ENCODE measurements at regions of chr10 and their contacts with region 1.

Region 1: GRCh38 chr10:68666280-68666760 is 54.7 kb upstream of the CCAR1 start:
- DNase-seq: peak; percentile 95
- ATAC-seq: peak; percentile 91
- H3K4me3 ChIP-seq: no peak overlapping the region
- H3K27ac ChIP-seq: peak overlapping the region; percentile 91
- H3K4me1 ChIP-seq: peaks cover 5% of the 10 kb centered on the region
- H3K27me3 ChIP-seq: no peaks in the 10 kb centered on the region
- CTCF ChIP-seq: no peak
- POLR2A ChIP-seq: no peak
- RAD21 ChIP-seq: no peak

Region 2: DNA sequence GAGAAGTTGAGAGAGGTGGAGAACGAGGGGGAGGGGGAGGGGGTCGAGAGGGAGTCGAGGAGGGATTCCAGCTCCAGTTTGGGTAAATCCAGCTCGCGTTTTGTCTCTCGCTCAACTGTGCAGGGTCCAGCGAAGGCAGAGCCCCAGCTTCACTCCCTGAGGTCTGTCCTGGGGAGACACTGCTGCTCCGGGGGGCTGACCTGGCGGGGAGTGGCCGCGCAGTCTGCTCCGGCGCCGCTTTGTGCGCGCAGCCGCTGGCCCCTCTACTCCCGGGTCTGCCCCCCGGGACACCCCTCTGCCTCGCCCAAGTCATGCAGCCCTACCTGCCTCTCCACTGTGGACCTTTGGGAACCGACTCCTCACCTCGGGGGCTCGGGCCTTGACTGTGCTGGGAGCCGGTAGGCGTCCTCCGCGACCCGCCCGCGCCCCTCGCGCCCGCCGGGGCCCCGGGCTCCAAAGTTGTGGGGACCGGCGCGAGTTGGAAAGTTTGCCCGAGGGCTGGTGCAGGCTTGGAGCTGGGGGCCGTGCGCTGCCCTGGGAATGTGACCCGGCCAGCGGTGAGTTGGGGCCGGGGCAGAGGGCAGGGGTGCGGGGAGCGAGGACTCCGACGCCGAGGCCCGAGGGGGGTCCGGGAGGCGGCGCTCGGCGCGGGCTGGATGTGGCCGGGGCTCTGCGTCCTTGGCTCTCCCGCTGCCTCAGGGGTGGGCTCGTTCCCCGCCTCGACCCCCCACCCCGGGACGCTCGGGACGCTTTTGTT is 106.0 kb before region 1 on chr10 and contains the start of gene TET1:
- CTCF ChIA-PET with region 1: no interaction called
- POLR2A ChIA-PET with region 1: no interaction called
- dilution Hi-C with region 1: no loop called
- in situ Hi-C with region 1: no loop called
- intact Hi-C with region 1: loop called (anchors 1 kb)
- DNase-seq: peak; percentile 59
- ATAC-seq: peak; percentile 67
- H3K4me3 ChIP-seq: peak within 1 kb of the TSS; percentile 96
- H3K27ac ChIP-seq: peak within 1 kb of the TSS; percentile 82
- H3K4me1 ChIP-seq: peaks cover 1% of the 10 kb centered on the region; the same call in 1 of the 2 replicates
- H3K27me3 ChIP-seq: no peaks in the 10 kb centered on the region
- CTCF ChIP-seq: no peak
- POLR2A ChIP-seq: peak; percentile 29; the same call in 1 of the 2 replicates
- RAD21 ChIP-seq: no peak
- total RNA-seq, gene TET1: 4.3 and 5.6 TPM in 2 replicates

Measured in IMR-90 (cell line).